ENCODE measurements at regions of chr19 and their contacts with region 1.

Region 1: GRCh38 chr19:45200568-45200994 is 22.0 kb downstream of the BLOC1S3 start:
- DNase-seq: peak in 2 of 4 experiments; percentile 33 to 73
- ATAC-seq: peak; percentile 87
- H3K4me3 ChIP-seq: no peak overlapping the region
- H3K27ac ChIP-seq: no peak overlapping the region
- H3K4me1 ChIP-seq: no peaks in the 10 kb centered on the region; a peak in 2 of 5 replicates
- H3K27me3 ChIP-seq: peaks cover 0 to 5% of the 10 kb centered on the region in 2 experiments; a peak in 1 of 5 replicates
- CTCF ChIP-seq: peak; percentile 61 to 83 (median 71)
- EP300 ChIP-seq: no peak
- POLR2A ChIP-seq: no peak
- RAD21 ChIP-seq: peak; percentile 28 to 95

Region 2: DNA sequence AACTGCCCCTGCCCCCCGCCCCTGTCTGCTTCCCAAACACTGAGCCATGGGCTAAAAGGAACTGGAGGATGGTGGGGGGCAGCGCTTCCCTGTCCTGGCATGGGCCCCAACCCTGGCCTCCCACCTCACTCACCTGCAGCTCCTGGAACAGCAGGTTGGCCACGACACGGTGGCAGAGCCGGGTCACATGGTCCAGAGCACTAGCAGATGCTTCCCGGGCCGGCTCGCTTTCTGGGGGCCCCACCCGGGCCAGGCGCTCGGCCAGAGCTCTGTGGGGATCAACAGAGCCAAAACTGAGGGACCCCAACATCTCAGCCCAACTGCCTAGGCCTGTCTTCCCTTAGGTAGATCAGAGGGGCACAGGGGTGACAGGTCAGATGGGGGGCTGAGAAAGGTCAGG is 24.1 kb after region 1 on chr19:
- CTCF ChIA-PET with region 1: no interaction called
- POLR2A ChIA-PET with region 1: no interaction called
- in situ Hi-C with region 1: no loop called
- intact Hi-C with region 1: no loop called
- DNase-seq: no peak
- ATAC-seq: no peak
- H3K4me3 ChIP-seq: no peak overlapping the region
- H3K27ac ChIP-seq: no peak overlapping the region
- H3K4me1 ChIP-seq: peaks cover under 1 to 10% of the 10 kb centered on the region in 2 experiments; a peak in 3 of 5 replicates
- H3K27me3 ChIP-seq: no peaks in the 10 kb centered on the region
- CTCF ChIP-seq: no peak
- EP300 ChIP-seq: no peak
- POLR2A ChIP-seq: no peak
- RAD21 ChIP-seq: no peak

Region 3: GRCh38 chr19:45250832-45251451 is 50.4 kb after region 1 on chr19 and contains the start of gene MARK4:
- CTCF ChIA-PET with region 1: interaction called, 7 read pairs
- POLR2A ChIA-PET with region 1: no interaction called
- in situ Hi-C with region 1: no loop called
- intact Hi-C with region 1: loop called (anchors 2 kb)
- DNase-seq: peak; percentile 74 to 96 (median 96)
- ATAC-seq: peak; percentile 73
- H3K4me3 ChIP-seq: peak within 1 kb of the TSS; percentile 65
- H3K27ac ChIP-seq: peak within 1 kb of the TSS; percentile 68; the same call in 2 of the 3 replicates
- H3K4me1 ChIP-seq: peaks cover 23 to 55% of the 10 kb centered on the region in 2 experiments
- H3K27me3 ChIP-seq: no peaks in the 10 kb centered on the region
- CTCF ChIP-seq: no peak
- EP300 ChIP-seq: no peak
- POLR2A ChIP-seq: peak; percentile 49; the same call in 1 of the 2 replicates
- RAD21 ChIP-seq: no peak
- polyA plus RNA-seq, gene MARK4: 0.52 to 0.96 TPM

Region 4: DNA sequence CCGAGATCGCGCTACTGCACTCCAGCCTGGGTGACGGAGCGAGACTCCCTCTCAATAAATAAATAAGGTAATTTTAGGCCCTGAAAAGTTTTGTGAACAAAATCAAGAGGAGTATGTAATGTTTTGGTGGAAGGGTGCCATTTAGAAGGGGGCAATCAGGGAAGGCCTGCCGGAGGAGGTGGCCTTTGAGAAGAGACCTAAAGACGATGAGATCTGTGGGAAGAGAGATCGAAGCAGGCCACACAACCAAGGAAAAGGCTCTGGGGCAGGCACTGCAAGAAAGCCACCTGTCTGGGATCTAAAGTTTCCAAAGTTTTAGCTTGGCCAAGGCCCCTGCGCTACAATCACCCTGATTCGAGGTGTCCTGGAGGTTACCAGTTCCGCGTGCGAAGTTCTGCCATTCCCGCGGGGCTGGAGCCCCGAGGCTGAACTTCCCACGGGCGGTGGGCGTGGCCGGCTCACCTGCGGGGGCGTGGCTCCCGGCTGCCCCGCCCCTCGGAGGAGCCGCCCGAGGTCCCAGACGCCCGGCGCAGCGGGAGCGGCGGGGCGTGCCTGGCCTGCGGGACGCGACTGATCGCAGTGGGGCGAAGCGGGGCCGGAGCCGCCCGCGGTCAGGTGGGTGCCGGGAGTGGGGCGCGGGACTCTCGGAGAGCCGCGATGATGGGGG is 139.8 kb after region 1 on chr19 and contains the start of gene KLC3:
- CTCF ChIA-PET with region 1: interaction called, 7 read pairs
- POLR2A ChIA-PET with region 1: interaction called, 3 read pairs
- in situ Hi-C with region 1: loop called (anchors 5 kb)
- intact Hi-C with region 1: loop called (anchors 1 kb)
- DNase-seq: peak; percentile 71 to 96 (median 92)
- ATAC-seq: peak; percentile 84
- H3K4me3 ChIP-seq: peak within 1 kb of the TSS; percentile 42
- H3K27ac ChIP-seq: no peak within 1 kb of the TSS
- H3K4me1 ChIP-seq: peaks cover 7 to 37% of the 10 kb centered on the region in 2 experiments; a peak in 4 of 5 replicates
- H3K27me3 ChIP-seq: peaks cover 8 to 13% of the 10 kb centered on the region in 2 experiments; a peak in 3 of 5 replicates
- CTCF ChIP-seq: no peak
- EP300 ChIP-seq: no peak
- POLR2A ChIP-seq: no peak
- RAD21 ChIP-seq: no peak
- polyA plus RNA-seq, gene KLC3: 0.03 TPM in 1 of 2 experiments, not detected in the other

Measured in K562 (cell line).